ENCODE measurements at regions of chr1 and their contacts with region 1.

Region 1: GRCh38 chr1:172002725-172003345 is 161.5 kb downstream of the DNM3 start:
- DNase-seq: peak; percentile 39
- ATAC-seq: no peak
- H3K4me3 ChIP-seq: no peak overlapping the region
- H3K27ac ChIP-seq: no peak overlapping the region
- H3K4me1 ChIP-seq: no peaks in the 10 kb centered on the region
- H3K27me3 ChIP-seq: no peaks in the 10 kb centered on the region
- CTCF ChIP-seq: peak; percentile 65 to 84 (median 75)
- POLR2A ChIP-seq: no peak
- RAD21 ChIP-seq: peak; percentile 80

Region 2: GRCh38 chr1:171984850-171985485 is 17.9 kb before region 1 on chr1:
- CTCF ChIA-PET with region 1: interaction called, 21 read pairs
- POLR2A ChIA-PET with region 1: no interaction called
- RAD21 ChIA-PET with region 1: no interaction called
- intact Hi-C with region 1: no loop called
- DNase-seq: peak; percentile 29
- ATAC-seq: peak; percentile 71
- H3K4me3 ChIP-seq: no peak overlapping the region
- H3K27ac ChIP-seq: no peak overlapping the region
- H3K4me1 ChIP-seq: no peaks in the 10 kb centered on the region
- H3K27me3 ChIP-seq: no peaks in the 10 kb centered on the region
- CTCF ChIP-seq: peak; percentile 81 to 84 (median 81)
- POLR2A ChIP-seq: no peak
- RAD21 ChIP-seq: peak; percentile 88

Region 3: DNA sequence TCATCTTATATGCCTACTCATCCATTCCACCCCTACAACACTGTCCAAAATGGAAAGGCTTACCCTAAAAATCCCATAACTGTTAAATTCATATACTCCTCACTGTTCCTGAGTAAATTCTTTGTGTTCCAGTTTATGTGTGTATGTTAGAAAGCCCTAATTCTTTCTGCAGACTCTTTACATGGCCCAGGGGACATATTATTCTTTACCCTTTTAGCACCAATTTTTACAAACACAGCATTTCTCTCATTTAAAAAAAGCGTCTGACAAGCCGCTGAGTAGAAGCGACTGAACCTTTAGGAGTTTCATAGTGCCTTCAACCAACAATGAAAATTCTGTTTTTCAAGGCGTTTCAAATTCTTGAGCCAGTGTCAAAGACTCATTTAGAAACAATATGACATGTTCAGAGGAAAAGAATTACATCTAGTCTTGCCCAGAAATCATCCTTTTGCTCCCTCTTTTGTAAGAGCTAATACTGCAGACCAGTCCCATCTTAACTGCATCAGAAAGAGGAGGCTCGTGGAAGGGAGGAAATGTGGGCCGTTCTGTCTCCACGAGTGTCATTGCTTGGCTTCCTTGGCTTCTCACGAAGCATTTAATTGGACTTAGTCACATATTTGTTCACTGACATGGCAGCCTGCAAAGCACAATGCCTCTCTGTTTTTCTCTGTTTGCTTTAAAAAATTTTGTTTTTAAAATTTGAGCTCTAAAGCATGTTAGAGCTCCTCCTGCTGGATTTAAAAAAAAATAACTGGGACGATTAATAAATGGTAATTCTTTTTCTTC is 396.3 kb after region 1 on chr1:
- CTCF ChIA-PET with region 1: interaction called, 34 read pairs
- POLR2A ChIA-PET with region 1: interaction called, 3 read pairs
- RAD21 ChIA-PET with region 1: no interaction called
- intact Hi-C with region 1: loop called (anchors 1 kb)
- DNase-seq: peak; percentile 58
- ATAC-seq: peak; percentile 82
- H3K4me3 ChIP-seq: no peak overlapping the region
- H3K27ac ChIP-seq: no peak overlapping the region
- H3K4me1 ChIP-seq: peaks cover 5 to 9% of the 10 kb centered on the region in 2 experiments; a peak in 3 of 4 replicates
- H3K27me3 ChIP-seq: peaks cover 5% of the 10 kb centered on the region; the same call in 1 of the 2 replicates
- CTCF ChIP-seq: peak; percentile 24 to 91 (median 73); a peak in 5 of 6 replicates
- POLR2A ChIP-seq: no peak
- RAD21 ChIP-seq: peak; percentile 90

Region 4: GRCh38 chr1:172443626-172444453 is 441.0 kb after region 1 on chr1 and contains the start of gene PIGC:
- CTCF ChIA-PET with region 1: interaction called, 5 read pairs
- POLR2A ChIA-PET with region 1: no interaction called
- RAD21 ChIA-PET with region 1: no interaction called
- intact Hi-C with region 1: loop called (anchors 5 kb)
- DNase-seq: peak; percentile 81
- ATAC-seq: peak; percentile 98
- H3K4me3 ChIP-seq: peak within 1 kb of the TSS; percentile 78 to 81
- H3K27ac ChIP-seq: peak within 1 kb of the TSS; percentile 51
- H3K4me1 ChIP-seq: peaks cover 4 to 13% of the 10 kb centered on the region in 2 experiments; a peak in 2 of 4 replicates
- H3K27me3 ChIP-seq: no peaks in the 10 kb centered on the region
- CTCF ChIP-seq: peak; percentile 81 to 92 (median 82)
- POLR2A ChIP-seq: no peak
- RAD21 ChIP-seq: peak; percentile 69
- total RNA-seq, gene PIGC: 11.9 TPM